ENCODE measurements at regions of chr3 and their contacts with region 1.

Region 1: GRCh38 chr3:192444096-192444790 is 283.1 kb downstream of the FGF12 start:
- DNase-seq: peak; percentile 66 to 86 (median 80)
- H3K4me3 ChIP-seq: no peak overlapping the region
- H3K27ac ChIP-seq: peak overlapping the region in 15 of 59 donors; percentile 2 to 60 (median 33)
- H3K27me3 ChIP-seq: peaks cover 0 to 17% (median 0%) of the 10 kb centered on the region in 45 donors
- CTCF ChIP-seq: peak; percentile 91 to 100 (median 99)

Region 2: DNA sequence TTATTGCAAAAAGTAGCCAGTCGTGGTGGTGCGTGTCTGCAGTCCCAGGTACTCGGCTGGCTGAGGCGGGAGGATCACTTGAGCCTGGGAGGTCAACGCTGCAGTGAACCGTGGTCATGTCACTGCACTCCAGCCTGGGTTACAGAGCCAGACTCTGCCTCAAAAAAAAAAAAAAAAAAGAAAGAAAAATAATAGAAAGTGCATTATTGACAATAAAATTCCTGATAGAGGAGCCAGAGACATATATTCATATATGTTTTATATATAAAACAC is 1026.8 kb before region 1 on chr3:
- intact Hi-C with region 1: loop called (anchors 2 kb)
- DNase-seq: no peak
- H3K4me3 ChIP-seq: no peak overlapping the region
- H3K27ac ChIP-seq: no peak overlapping the region
- H3K27me3 ChIP-seq: peaks cover 0 to 4% (median 0%) of the 10 kb centered on the region in 45 donors
- CTCF ChIP-seq: no peak

Region 3: DNA sequence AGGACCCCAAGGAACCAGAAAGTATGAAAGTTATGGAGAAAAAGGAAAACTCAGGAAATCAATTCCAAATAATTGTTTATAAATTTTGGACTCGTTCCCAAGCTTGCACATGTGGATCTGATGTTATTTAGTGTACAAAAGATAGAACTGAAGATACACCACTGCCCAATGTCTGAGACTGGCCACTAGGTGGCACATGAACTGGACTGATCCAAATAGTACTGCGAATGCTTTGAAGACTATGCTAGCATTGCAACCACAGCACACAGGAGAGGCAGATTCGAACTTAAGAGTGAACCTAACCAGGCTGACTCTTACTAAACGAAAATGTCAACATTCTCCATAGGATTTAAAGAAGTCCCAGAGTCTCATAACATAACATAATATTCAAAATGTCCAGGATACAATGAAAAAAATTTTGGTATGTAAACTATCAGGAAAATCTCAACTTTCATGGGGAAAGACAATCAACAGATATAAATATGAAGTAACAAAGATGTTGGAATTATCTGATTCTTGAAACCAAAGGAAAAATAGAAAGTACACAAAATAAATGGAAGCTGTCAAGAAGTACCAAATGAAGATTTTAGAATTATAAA is 313.6 kb before region 1 on chr3:
- intact Hi-C with region 1: loop called (anchors 5 to 10 kb)
- DNase-seq: peak; percentile 20 to 74 (median 48)
- H3K4me3 ChIP-seq: no peak overlapping the region
- H3K27ac ChIP-seq: no peak overlapping the region
- H3K27me3 ChIP-seq: peaks cover 0 to 2% (median 0%) of the 10 kb centered on the region in 45 donors
- CTCF ChIP-seq: peak; percentile 62 to 87 (median 78)

Region 4: GRCh38 chr3:192188218-192188835 is 255.9 kb before region 1 on chr3:
- intact Hi-C with region 1: loop called in 1 of 2 experiments (anchors 5 kb)
- DNase-seq: peak in 3 of 10 donors; percentile 7 to 35 (median 13)
- H3K4me3 ChIP-seq: no peak overlapping the region
- H3K27ac ChIP-seq: no peak overlapping the region
- H3K27me3 ChIP-seq: no peaks in the 10 kb centered on the region
- CTCF ChIP-seq: peak; percentile 14 to 72 (median 52)

Region 5: DNA sequence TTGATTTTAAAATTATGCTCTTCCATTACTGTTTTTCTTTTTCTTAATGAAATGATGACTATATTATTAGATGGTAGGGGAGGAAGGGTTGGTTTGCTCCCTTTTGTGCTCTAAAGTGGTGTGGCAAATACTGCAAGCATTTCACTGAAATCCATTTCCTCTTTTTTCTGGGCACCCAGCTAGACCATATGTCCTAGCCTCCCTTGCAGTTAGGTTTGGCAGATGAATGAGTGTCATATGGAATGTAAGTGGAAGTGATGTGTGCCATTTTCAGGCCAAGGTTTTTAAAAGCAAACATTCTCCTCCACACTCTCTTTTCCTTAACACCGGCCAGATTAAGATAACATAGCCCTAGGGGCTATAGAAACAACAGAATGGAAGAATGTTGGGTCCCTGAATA is 79.9 kb before region 1 on chr3:
- intact Hi-C with region 1: no loop called
- DNase-seq: peak in 1 of 10 donors; percentile 22
- H3K4me3 ChIP-seq: no peak overlapping the region
- H3K27ac ChIP-seq: no peak overlapping the region
- H3K27me3 ChIP-seq: peaks cover 0 to 3% (median 0%) of the 10 kb centered on the region in 45 donors
- CTCF ChIP-seq: no peak